ENCODE measurements at regions of chr9 and their contacts with region 1.

Region 1: DNA sequence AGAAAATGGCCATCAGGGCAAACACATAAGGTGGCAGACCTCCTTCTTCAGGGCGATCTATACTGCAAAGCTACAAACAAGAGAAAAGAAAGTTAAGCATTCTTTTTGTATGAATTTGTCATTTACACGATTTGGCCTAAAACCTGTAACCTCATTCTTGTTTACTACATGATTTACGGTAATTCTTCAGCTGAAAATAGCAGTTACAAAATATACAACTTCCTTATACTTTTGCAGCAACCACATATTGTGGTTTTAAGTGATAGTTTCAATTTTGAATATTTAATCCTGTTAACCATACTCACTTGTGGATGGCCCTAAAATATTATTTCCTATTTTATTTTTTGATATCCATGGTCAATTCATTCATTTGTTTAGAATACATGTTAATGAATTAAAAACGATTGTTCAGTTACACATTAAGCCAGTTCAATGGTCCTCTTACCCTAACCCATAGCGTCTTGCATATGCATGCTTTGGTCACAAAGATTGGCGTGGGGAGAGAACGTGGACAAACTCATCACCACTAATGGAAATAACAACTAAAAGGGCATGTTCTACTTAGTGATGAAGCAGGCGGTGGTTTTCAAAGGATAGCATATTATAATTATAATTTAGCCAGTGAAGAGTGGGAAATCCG is 16.6 kb downstream of the TUT7 start:
- DNase-seq: no peak
- H3K4me3 Mint-ChIP-seq: peak overlapping the region; percentile 83
- H3K27ac Mint-ChIP-seq: peak overlapping the region; percentile 63
- H3K4me1 Mint-ChIP-seq: peaks cover 46% of the 10 kb centered on the region
- H3K27me3 Mint-ChIP-seq: no peaks in the 10 kb centered on the region

Region 2: DNA sequence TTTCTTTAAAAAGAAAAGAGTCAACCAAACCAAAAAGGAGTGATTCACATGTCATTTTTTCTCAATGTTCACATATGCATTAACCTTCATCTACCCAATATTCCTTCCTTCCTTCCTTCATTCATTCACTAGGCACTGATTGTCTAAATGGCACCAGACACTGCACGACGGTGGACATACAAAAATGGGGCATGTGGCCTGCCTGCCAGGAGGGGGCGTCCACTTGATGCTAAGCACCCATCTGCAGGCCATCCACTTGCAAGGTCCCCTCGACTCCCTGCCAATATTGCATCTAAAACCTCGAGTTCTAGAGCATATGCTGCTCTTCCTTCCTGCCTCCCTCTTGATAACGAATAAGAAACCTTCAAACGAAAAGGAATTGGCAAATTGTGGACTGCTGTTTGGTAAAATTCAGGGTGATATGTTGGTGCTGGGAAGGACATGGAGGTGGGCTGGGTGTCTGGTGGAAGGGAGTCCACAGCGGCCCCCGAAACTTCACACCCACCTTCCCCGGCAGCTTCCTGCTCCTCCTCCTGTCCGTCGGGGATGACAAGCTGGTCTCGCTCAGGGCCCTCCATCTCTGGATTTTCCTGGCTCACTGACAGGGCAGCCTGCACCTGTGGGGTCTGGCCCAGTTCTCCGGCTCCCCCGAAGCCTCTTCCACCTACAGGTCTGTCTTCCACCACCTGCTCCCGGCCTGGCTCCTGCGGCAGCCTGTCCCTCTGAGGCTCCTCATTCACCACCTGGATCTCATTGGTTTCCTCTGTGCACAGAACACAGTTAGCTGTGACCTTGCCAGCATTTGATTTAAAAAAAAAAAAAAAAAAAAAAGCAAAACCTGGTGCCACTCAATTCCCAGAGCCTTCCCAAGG is 302.5 kb before region 1 on chr9:
- intact Hi-C with region 1: no loop called
- DNase-seq: no peak
- H3K4me3 Mint-ChIP-seq: no peak overlapping the region
- H3K27ac Mint-ChIP-seq: no peak overlapping the region
- H3K4me1 Mint-ChIP-seq: no peaks in the 10 kb centered on the region
- H3K27me3 Mint-ChIP-seq: no peaks in the 10 kb centered on the region

Region 3: GRCh38 chr9:86303316-86303975 is 34.1 kb before region 1 on chr9:
- intact Hi-C with region 1: loop called (anchors 5 kb)
- DNase-seq: peak; percentile 43
- H3K4me3 Mint-ChIP-seq: peak overlapping the region; percentile 19
- H3K27ac Mint-ChIP-seq: peak overlapping the region; percentile 71
- H3K4me1 Mint-ChIP-seq: peaks cover 39% of the 10 kb centered on the region
- H3K27me3 Mint-ChIP-seq: no peaks in the 10 kb centered on the region

Region 4: DNA sequence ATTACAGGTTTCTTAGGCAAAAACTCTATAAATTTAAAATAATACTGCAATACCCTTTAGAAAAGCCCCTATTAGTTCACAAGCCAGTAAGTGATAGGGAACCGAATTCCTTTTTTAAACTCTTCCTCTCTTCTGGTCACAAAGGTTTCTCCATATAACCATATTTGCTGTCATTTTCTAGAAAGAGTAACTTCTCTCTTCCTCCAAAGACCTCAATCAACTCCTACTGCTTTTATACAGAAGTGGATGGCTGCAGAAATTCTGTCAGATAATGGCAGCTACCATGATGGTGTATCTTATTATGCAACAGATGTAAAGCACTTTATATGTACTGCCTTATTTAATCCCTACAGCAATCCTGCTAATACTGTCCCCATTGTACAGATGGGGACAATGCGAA is 10.4 kb after region 1 on chr9:
- intact Hi-C with region 1: loop called (anchors 1 kb)
- DNase-seq: no peak
- H3K4me3 Mint-ChIP-seq: peak overlapping the region; percentile 47
- H3K27ac Mint-ChIP-seq: no peak overlapping the region
- H3K4me1 Mint-ChIP-seq: peaks cover 68% of the 10 kb centered on the region
- H3K27me3 Mint-ChIP-seq: no peaks in the 10 kb centered on the region